ENCODE measurements at regions of chr7 and their contacts with region 1.

Region 1: GRCh38 chr7:17298207-17298839 is at the start of gene AHR:
- DNase-seq: peak; percentile 70
- H3K4me3 ChIP-seq: peak within 1 kb of the TSS; percentile 76
- CTCF ChIP-seq: no peak

Region 2: GRCh38 chr7:16926283-16926682 is 372.0 kb before region 1 on chr7:
- CTCF ChIA-PET with region 1: interaction called, 14 read pairs
- POLR2A ChIA-PET with region 1: no interaction called
- DNase-seq: no peak
- H3K4me3 ChIP-seq: no peak overlapping the region
- CTCF ChIP-seq: peak; percentile 72

Region 3: GRCh38 chr7:16982640-16983350 is 315.5 kb before region 1 on chr7:
- CTCF ChIA-PET with region 1: interaction called, 27 read pairs
- POLR2A ChIA-PET with region 1: no interaction called
- DNase-seq: no peak
- H3K4me3 ChIP-seq: no peak overlapping the region
- CTCF ChIP-seq: peak; percentile 69

Region 4: DNA sequence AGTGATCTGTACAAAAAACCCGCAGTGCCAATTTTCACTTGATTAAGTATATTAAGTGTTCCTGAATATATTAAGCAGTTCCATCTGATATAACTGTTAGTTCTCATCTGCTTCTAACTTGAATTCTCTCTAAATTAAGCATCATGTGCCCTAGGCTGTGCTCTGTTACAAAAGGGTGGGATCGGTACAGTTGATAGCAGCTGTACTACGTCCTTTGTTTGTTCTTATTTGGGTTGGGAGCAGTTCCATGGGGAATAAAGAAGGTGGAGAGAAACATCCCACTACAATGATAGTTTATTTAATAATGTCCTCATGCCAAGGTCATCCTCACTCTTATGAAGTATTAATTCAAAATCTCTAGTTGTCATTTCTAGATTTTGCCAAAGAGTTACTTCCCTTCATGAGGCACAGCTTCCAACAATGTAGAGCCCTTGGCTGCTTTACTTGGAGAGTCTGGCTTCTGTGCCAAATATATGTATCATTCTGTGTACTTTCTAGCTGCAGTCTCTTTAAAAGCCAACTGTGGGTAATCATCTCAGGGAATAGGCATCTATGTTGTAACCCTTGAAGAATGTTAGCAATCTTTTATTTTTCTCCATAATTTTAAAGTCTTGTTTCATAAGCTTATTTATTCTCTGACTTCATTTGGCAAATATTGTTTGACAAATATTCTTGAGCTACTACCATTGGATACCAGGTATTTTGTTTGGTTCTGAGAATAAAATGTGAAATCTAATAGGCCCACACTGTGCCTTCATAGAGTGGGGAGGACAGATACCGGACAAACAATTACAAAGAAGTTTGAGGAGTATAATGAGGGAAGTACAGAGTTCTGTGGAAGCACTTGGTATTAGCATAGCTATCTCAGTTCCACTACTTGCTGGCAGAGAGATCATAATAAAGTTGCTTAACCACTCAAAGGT is 22.3 kb before region 1 on chr7:
- CTCF ChIA-PET with region 1: interaction called, 12 read pairs
- POLR2A ChIA-PET with region 1: interaction called, 3 read pairs
- DNase-seq: peak; percentile 92
- H3K4me3 ChIP-seq: no peak overlapping the region
- CTCF ChIP-seq: no peak

Region 5: DNA sequence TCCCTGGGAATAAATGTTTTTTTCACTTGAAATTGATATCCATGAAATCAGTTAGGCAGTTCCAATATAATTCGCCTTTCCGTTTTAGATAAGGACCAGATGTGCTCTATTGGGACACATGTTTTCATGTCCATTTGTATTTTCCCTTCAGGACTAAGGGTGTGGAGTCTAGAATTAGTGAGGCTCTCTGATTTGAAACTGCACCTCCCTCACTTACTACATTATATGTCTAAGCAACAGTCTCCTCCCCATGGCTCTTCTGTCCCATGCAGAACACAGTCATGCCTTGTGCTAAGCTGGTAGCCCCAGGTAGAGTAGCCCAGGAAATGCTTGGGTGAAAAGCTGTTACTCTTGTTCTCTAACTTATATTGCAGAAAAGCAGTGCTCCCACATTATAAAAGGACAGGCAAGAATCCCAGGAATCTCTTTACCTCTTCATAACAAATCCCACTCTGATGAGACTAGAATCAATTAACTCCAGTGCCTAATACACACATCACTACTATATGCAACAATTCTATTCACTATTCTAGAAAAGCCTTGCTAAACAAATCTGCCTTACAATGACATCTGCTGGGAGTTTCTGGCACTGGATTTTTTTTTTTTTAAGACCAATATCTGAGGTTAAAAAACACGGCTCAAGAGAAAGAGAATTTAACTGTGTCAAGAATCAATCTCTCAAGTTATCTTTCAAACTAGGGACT is 348.1 kb after region 1 on chr7:
- CTCF ChIA-PET with region 1: interaction called, 11 read pairs
- POLR2A ChIA-PET with region 1: interaction called, 3 read pairs
- DNase-seq: no peak
- H3K4me3 ChIP-seq: no peak overlapping the region
- CTCF ChIP-seq: peak; percentile 18

Region 6: GRCh38 chr7:17651926-17652385 is 353.6 kb after region 1 on chr7:
- CTCF ChIA-PET with region 1: interaction called, 11 read pairs
- POLR2A ChIA-PET with region 1: interaction called, 3 read pairs
- DNase-seq: peak; percentile 82
- H3K4me3 ChIP-seq: no peak overlapping the region
- CTCF ChIP-seq: peak; percentile 4

Region 7: DNA sequence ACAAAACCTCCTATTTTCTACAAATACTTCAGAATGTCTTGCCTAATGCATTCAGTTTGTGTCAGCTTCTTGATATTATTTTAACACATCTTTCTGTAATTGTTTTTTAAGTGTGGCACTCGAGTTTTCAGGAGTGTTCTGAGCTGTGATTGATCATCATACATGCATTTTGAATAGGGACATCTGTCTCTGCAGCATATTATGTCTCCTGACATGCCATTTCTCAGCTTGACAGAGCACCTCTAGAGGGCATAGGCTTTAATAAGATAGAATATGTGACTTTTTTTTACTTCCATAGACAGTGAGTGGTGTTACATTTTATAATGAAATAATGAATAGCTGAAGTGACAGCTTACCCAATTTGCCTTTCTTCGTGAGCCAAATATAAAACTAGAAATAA is 978.1 kb after region 1 on chr7:
- CTCF ChIA-PET with region 1: no interaction called
- POLR2A ChIA-PET with region 1: no interaction called
- DNase-seq: no peak
- H3K4me3 ChIP-seq: no peak overlapping the region
- CTCF ChIP-seq: no peak